PC-9 (cell line): ENCODE measurements at regions of chr7 and their contacts with region 1.

Region 1: DNA sequence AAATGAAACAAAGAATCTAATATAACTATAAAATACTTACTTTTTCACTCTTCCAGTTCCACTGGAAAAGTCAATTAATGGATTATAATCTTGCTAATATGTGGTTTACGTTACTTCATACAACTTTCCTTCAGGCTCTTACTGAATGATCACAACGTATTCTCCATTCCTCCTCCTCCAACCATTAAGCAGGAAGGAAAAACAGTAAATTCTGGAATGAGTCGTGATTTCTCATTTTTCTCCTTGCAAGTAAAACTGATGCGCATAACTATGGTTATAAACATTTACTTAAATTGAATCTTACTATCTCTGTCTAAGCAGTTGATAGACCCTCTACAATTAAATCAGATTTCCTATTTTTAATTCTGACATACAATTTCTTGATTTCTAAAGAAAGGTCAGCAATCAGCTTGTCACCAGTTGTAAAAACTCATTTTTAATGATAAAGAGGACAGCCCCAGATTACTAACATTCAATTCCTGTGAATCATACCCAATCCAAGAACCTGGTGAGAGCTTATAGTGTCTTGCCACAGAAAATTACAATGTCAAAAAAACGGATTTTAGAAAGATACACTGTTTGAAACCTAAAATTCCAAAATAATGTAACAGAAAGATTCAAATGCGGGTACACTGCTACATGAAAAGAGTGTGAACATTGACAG is 64.3 kb downstream of the EZH2 start:
- DNase-seq: peak in 1 of 2 experiments; percentile 40
- H3K4me3 ChIP-seq: no peak overlapping the region
- H3K27ac ChIP-seq: peak overlapping the region; percentile 15; the same call in 1 of the 2 replicates
- H3K4me1 ChIP-seq: peaks cover 6% of the 10 kb centered on the region; the same call in 1 of the 2 replicates
- H3K27me3 ChIP-seq: no peaks in the 10 kb centered on the region
- CTCF ChIP-seq: no peak

Region 2: DNA sequence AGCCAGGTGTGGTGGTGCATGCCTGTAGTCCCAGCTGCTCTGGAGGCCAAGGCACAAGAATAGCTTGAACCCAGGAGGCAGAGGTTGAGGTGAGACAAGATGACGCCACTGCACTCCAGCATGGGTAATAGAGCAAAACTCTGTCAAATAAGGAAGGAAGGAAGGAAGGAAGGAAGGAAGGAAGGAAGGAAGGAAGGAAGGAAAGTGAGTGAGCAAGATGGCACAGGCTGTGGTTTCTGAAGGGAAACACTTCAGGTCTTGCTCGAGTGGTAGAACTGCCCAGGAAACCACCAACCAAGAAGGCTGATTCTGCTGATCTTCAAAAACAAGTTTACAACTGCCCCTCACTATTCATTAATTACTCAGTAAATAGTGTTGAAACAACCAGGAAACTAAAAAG is 19.1 kb after region 1 on chr7:
- CTCF ChIA-PET with region 1: no interaction called
- POLR2A ChIA-PET with region 1: no interaction called
- intact Hi-C with region 1: no loop called
- DNase-seq: no peak
- H3K4me3 ChIP-seq: no peak overlapping the region
- H3K27ac ChIP-seq: no peak overlapping the region
- H3K4me1 ChIP-seq: no peaks in the 10 kb centered on the region
- H3K27me3 ChIP-seq: no peaks in the 10 kb centered on the region
- CTCF ChIP-seq: no peak

Region 3: GRCh38 chr7:148849393-148850098 is 29.7 kb after region 1 on chr7:
- CTCF ChIA-PET with region 1: no interaction called
- POLR2A ChIA-PET with region 1: interaction called, 21 read pairs
- intact Hi-C with region 1: no loop called
- DNase-seq: no peak
- H3K4me3 ChIP-seq: no peak overlapping the region
- H3K27ac ChIP-seq: no peak overlapping the region
- H3K4me1 ChIP-seq: no peaks in the 10 kb centered on the region
- H3K27me3 ChIP-seq: no peaks in the 10 kb centered on the region
- CTCF ChIP-seq: no peak

Region 4: GRCh38 chr7:148914208-148914777 is 94.5 kb after region 1 on chr7:
- CTCF ChIA-PET with region 1: interaction called, 10 read pairs
- POLR2A ChIA-PET with region 1: no interaction called
- intact Hi-C with region 1: no loop called
- DNase-seq: peak; percentile 45 to 80
- H3K4me3 ChIP-seq: peak overlapping the region; percentile 16; the same call in 1 of the 2 replicates
- H3K27ac ChIP-seq: peak overlapping the region; percentile 69
- H3K4me1 ChIP-seq: peaks cover 25% of the 10 kb centered on the region
- H3K27me3 ChIP-seq: no peaks in the 10 kb centered on the region
- CTCF ChIP-seq: no peak

Region 5: DNA sequence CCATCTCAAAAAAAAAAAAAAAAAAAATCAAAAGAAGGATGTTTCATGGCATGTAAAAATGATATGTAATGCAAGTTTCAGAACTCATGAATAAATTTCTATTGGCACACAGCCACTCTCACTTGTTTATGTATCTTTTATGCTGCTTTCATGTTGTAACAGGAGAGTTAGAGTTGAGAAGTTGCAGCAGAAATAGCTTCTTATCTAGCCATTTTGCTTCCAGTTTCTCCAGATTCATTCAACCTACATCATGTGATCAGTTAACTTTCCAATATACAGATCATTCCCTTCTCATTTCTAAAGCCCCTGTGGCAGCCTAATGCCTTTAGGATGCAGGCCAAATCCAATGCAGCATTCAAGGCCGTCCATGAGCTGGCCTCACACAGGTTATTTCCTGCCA is 240.3 kb after region 1 on chr7:
- CTCF ChIA-PET with region 1: no interaction called
- POLR2A ChIA-PET with region 1: interaction called, 12 read pairs
- intact Hi-C with region 1: no loop called
- DNase-seq: no peak
- H3K4me3 ChIP-seq: no peak overlapping the region
- H3K27ac ChIP-seq: no peak overlapping the region
- H3K4me1 ChIP-seq: peaks cover 11% of the 10 kb centered on the region
- H3K27me3 ChIP-seq: no peaks in the 10 kb centered on the region
- CTCF ChIP-seq: no peak